T-cell (primary cell): ENCODE measurements at regions of chr6 and their contacts with region 1.

Region 1: DNA sequence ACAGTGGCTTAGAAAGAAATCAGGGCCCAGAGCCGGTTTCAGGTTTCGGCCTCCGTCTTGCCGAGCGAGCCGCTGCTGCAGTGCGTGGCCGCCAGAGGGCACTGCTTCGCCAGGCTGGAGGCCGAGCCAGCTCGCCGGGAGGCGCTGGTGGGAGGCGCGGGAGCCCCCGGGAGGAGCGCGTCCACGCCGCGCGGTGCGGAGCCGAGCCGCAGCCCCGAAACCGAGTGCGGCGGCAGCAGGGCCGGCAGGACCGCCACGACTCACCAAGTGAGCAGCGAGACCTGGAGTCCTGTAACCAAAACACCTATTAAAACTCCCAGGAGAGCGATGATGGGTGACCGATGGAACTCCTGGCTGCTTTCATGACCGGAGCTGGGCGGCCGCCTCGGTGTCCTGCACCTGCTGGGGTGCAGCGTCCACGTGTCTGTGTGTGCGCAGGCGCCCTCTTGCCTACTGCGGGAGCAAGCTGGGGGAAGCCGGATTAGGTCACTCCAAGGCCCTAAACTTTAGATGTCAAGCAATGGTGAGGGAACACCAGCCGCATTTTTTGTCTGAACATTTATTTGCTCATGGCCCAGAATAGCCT is 186.9 kb upstream of the UST start:
- DNase-seq: peak; percentile 19 to 80 (median 57)
- ATAC-seq: peak; percentile 75 to 87 (median 86)
- H3K4me3 ChIP-seq: peak overlapping the region; percentile 15 to 64
- H3K4me3 Mint-ChIP-seq: no peak overlapping the region
- H3K27ac ChIP-seq: no peak overlapping the region
- H3K27ac Mint-ChIP-seq: no peak overlapping the region
- H3K4me1 ChIP-seq: peaks cover 0 to 13% of the 10 kb centered on the region in 2 experiments
- H3K4me1 Mint-ChIP-seq: peaks cover 8 to 11% (median 8%) of the 10 kb centered on the region in 3 donors
- H3K27me3 ChIP-seq: peaks cover 2 to 29% of the 10 kb centered on the region in 2 experiments
- H3K27me3 Mint-ChIP-seq: peaks cover 17 to 19% of the 10 kb centered on the region in 2 donors

Region 2: GRCh38 chr6:148578245-148578732 is 18.3 kb after region 1 on chr6:
- CTCF ChIA-PET with region 1: interaction called, 5 to 10 read pairs
- POLR2A ChIA-PET with region 1: no interaction called
- DNase-seq: peak in 26 of 35 experiments; percentile 7 to 61 (median 21)
- ATAC-seq: peak; percentile 76 to 91 (median 80)
- H3K4me3 ChIP-seq: no peak overlapping the region
- H3K4me3 Mint-ChIP-seq: no peak overlapping the region
- H3K27ac ChIP-seq: no peak overlapping the region
- H3K27ac Mint-ChIP-seq: no peak overlapping the region
- H3K4me1 ChIP-seq: no peaks in the 10 kb centered on the region
- H3K4me1 Mint-ChIP-seq: no peaks in the 10 kb centered on the region
- H3K27me3 ChIP-seq: peaks cover 0 to 16% of the 10 kb centered on the region in 2 experiments
- H3K27me3 Mint-ChIP-seq: peaks cover 18 to 31% of the 10 kb centered on the region in 2 donors

Region 3: DNA sequence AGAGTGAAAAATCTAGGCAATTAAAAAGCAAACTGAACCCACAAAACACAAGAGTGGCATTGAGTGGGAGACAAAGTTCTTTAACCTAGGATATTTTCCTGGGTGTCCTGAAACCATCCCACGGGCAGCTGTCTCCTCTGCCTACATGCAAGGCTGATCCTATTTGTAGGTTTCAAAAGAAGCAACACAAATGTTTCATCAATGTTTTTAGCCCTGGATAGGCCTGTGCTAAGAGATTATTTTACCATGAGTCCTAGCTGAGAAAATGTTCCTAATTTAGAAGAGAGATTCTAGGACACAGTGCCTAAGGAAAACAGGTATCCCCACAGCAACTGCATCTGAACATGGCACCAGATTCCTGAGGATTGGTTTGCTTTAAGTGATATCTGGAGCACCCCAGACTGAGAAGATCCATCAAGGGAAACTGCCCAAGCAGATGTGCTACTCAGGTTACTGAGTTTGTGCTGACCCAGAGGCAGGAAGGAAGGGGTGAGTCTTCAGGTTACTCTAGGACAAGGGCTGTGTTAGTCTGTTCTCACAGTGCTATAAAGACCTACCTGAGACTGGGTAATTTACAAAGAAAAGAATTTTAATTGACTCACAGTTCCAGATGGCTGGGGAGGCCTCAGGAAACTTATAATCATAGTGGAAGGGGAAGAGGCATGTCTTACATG is 75.3 kb after region 1 on chr6:
- CTCF ChIA-PET with region 1: no interaction called
- POLR2A ChIA-PET with region 1: no interaction called
- DNase-seq: no peak
- ATAC-seq: no peak
- H3K4me3 ChIP-seq: no peak overlapping the region
- H3K4me3 Mint-ChIP-seq: no peak overlapping the region
- H3K27ac ChIP-seq: no peak overlapping the region
- H3K27ac Mint-ChIP-seq: no peak overlapping the region
- H3K4me1 ChIP-seq: no peaks in the 10 kb centered on the region
- H3K4me1 Mint-ChIP-seq: peaks cover 5 to 6% (median 6%) of the 10 kb centered on the region in 3 donors
- H3K27me3 ChIP-seq: no peaks in the 10 kb centered on the region
- H3K27me3 Mint-ChIP-seq: peaks cover 0 to 4% of the 10 kb centered on the region in 2 donors

Region 4: GRCh38 chr6:148885136-148885870 is 325.4 kb after region 1 on chr6:
- CTCF ChIA-PET with region 1: interaction called, 3 to 15 read pairs
- POLR2A ChIA-PET with region 1: no interaction called
- DNase-seq: no peak
- ATAC-seq: no peak
- H3K4me3 ChIP-seq: no peak overlapping the region
- H3K4me3 Mint-ChIP-seq: no peak overlapping the region
- H3K27ac ChIP-seq: no peak overlapping the region
- H3K27ac Mint-ChIP-seq: no peak overlapping the region
- H3K4me1 ChIP-seq: no peaks in the 10 kb centered on the region
- H3K4me1 Mint-ChIP-seq: peaks cover 0 to 2% (median 0%) of the 10 kb centered on the region in 3 donors
- H3K27me3 ChIP-seq: no peaks in the 10 kb centered on the region
- H3K27me3 Mint-ChIP-seq: no peaks in the 10 kb centered on the region